ENCODE measurements at regions of chr16 and their contacts with region 1.

Region 1: DNA sequence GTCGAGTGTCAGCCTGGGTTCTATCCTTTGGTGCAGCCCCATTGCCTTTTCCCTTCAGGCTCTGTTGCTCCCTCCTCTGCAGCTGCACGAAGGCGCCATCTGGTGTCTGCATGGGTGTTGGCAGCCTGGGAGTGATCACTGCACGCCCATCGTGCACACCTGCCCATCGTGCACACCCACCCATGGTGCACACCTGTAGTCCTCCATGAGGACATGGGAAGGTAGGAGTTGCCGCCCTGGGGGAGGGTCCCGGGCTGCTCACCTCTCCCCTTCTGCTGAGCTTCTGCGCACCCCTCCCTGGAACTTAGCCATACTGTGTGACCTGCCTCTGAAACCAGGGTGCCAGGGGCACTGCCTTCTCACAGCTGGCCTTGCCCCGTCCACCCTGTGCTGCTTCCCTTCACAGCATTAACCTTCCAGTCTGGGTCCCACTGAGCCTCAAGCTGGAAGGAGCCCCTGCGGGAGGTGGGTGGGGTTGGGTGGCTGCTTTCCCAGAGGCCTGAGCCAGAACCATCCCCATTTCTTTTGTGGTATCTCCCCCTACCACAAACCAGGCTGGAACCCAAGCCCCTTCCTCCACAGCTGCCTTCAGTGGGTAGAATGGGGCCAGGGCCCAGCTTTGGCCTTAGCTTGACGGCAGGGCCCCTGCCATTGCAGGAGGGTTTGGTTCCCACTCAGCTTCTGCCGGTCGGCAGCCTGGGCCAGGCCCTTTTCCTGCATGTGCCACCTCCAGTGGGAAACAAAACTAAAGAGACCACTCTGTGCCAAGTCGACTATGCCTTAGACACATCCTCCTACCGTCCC is 2.9 kb downstream of the CTRL start:
- DNase-seq: peak; percentile 46 to 65
- ATAC-seq: peak; percentile 59 to 61
- H3K4me3 ChIP-seq: no peak overlapping the region
- H3K27ac ChIP-seq: peak overlapping the region in 2 of 4 donors; percentile 60 to 66
- H3K4me1 ChIP-seq: peaks cover 29 to 34% of the 10 kb centered on the region in 2 donors
- H3K27me3 ChIP-seq: no peaks in the 10 kb centered on the region
- CTCF ChIP-seq: peak; percentile 88 to 95 (median 93)
- POLR2A ChIP-seq: no peak

Region 2: GRCh38 chr16:67672739-67673662 is 255.8 kb before region 1 on chr16:
- in situ Hi-C with region 1: no loop called
- intact Hi-C with region 1: loop called (anchors 10 kb)
- DNase-seq: peak; percentile 40 to 57
- ATAC-seq: peak; percentile 38 to 51
- H3K4me3 ChIP-seq: no peak overlapping the region
- H3K27ac ChIP-seq: peak overlapping the region; percentile 50 to 80 (median 73)
- H3K4me1 ChIP-seq: peaks cover 13 to 21% of the 10 kb centered on the region in 2 donors
- H3K27me3 ChIP-seq: no peaks in the 10 kb centered on the region
- CTCF ChIP-seq: peak; percentile 63 to 82 (median 74)
- POLR2A ChIP-seq: no peak

Region 3: GRCh38 chr16:67816240-67817031 is 112.3 kb before region 1 on chr16:
- in situ Hi-C with region 1: loop called (anchors 5 to 10 kb)
- intact Hi-C with region 1: loop called (anchors 2 kb)
- DNase-seq: peak; percentile 69 to 81
- ATAC-seq: peak; percentile 91 to 96
- H3K4me3 ChIP-seq: no peak overlapping the region
- H3K27ac ChIP-seq: peak overlapping the region; percentile 49 to 78 (median 59)
- H3K4me1 ChIP-seq: no peaks in the 10 kb centered on the region
- H3K27me3 ChIP-seq: no peaks in the 10 kb centered on the region
- CTCF ChIP-seq: peak; percentile 99 to 100 (median 100)
- POLR2A ChIP-seq: no peak

Region 4: GRCh38 chr16:67822511-67822910 is 106.3 kb before region 1 on chr16:
- in situ Hi-C with region 1: loop called (anchors 5 to 10 kb)
- intact Hi-C with region 1: loop called (anchors 2 kb)
- DNase-seq: no peak
- ATAC-seq: no peak
- H3K4me3 ChIP-seq: no peak overlapping the region
- H3K27ac ChIP-seq: no peak overlapping the region
- H3K4me1 ChIP-seq: no peaks in the 10 kb centered on the region
- H3K27me3 ChIP-seq: no peaks in the 10 kb centered on the region
- CTCF ChIP-seq: no peak
- POLR2A ChIP-seq: no peak

Region 5: DNA sequence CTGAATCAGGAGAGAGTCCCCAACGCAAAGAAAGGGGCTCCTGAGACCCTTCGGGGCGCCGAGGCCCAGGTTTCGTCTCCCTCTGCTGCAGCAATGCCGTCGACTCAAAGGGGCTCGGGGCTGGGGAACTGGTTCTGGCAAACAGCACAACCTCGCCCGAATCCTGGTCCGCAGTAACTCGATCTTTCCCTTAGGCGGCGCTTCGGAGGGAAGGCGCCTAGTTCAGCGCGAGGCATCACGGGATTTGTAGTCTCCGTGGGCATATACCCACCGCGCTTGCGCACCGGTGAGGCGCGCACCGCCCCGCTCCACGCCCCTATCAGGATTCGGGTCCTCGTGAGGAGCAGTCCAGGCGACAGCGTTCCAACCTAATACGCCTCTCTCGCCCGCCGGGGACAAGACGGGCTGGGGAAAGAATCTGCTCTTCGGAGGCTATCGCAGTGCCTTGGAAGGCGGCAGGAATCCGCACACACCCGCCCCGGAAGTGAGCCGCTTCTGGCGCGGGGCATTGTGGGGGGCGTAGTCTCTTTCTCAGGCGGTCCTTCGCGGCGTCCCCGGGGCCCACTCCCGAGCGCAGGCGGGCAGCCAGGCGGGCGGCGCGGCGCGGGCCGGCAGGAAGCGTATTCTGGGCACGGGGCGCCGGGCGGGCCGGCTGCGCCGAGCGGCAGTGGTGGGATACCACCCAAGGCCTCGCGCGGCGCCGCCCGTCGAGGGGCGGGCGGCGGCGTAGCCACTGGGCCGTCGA is 86.8 kb before region 1 on chr16 and contains the start of gene THAP11:
- in situ Hi-C with region 1: no loop called
- intact Hi-C with region 1: loop called (anchors 5 kb)
- DNase-seq: peak; percentile 91 to 92
- ATAC-seq: peak; percentile 77 to 82
- H3K4me3 ChIP-seq: peak within 1 kb of the TSS; percentile 76 to 95 (median 78)
- H3K27ac ChIP-seq: peak within 1 kb of the TSS; percentile 98 to 100 (median 99)
- H3K4me1 ChIP-seq: peaks cover 39 to 43% of the 10 kb centered on the region in 2 donors
- H3K27me3 ChIP-seq: no peaks in the 10 kb centered on the region
- CTCF ChIP-seq: peak; percentile 76 to 91 (median 89)
- POLR2A ChIP-seq: peak; percentile 86 to 87
- total RNA-seq, gene THAP11: 61.9 to 120 (median 102) TPM

Region 6: DNA sequence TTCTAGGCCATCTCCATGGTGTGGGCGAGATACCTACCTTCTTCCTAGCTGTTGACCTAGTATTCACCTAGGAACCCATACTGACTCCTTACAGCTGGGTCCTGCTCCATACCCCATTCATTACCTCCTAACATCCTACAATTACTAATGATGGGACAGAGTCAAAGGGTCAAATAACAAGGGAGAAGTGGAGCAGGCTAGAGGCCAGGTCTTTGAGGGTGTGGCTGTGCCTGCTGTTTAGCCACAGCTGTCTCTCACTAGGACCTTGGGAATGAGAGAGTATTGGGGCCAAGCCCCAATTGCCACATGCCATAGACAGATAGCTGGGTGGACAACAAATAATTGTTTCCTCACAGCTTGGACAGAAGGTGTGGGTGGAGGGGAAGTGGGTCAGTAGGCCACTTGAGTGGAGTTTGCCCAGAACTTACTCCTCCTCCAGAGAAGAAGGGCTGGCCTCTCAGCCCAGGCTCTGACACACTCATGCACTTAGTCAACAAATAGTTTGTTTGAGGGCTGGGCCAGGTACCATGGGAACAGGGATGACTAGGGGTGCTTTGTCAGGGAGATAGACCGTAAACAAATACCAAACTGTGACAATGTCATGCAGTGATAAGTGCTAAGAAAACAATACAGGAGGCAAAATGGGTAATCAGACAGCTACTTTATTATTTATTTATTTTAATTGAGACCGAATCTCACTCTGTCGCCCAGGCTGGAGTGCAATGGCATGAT is 71.1 kb before region 1 on chr16:
- in situ Hi-C with region 1: no loop called
- intact Hi-C with region 1: no loop called
- DNase-seq: peak; percentile 91 to 92
- ATAC-seq: peak; percentile 87 to 90
- H3K4me3 ChIP-seq: peak overlapping the region in 1 of 4 donors; percentile 29
- H3K27ac ChIP-seq: peak overlapping the region; percentile 93 to 99 (median 97)
- H3K4me1 ChIP-seq: peaks cover 69% of the 10 kb centered on the region in 2 donors
- H3K27me3 ChIP-seq: no peaks in the 10 kb centered on the region
- CTCF ChIP-seq: no peak
- POLR2A ChIP-seq: no peak

Region 7: GRCh38 chr16:67872786-67873537 is 55.8 kb before region 1 on chr16 and contains the start of gene EDC4:
- in situ Hi-C with region 1: no loop called
- intact Hi-C with region 1: no loop called
- DNase-seq: peak; percentile 68 to 85
- ATAC-seq: peak; percentile 86 to 89
- H3K4me3 ChIP-seq: peak within 1 kb of the TSS; percentile 71 to 92 (median 84)
- H3K27ac ChIP-seq: peak within 1 kb of the TSS; percentile 85 to 94 (median 89)
- H3K4me1 ChIP-seq: peaks cover 28 to 31% of the 10 kb centered on the region in 2 donors
- H3K27me3 ChIP-seq: no peaks in the 10 kb centered on the region
- CTCF ChIP-seq: no peak
- POLR2A ChIP-seq: peak; percentile 73 to 88
- total RNA-seq, gene EDC4: 27.5 to 58.9 (median 48.5) TPM

Region 8: DNA sequence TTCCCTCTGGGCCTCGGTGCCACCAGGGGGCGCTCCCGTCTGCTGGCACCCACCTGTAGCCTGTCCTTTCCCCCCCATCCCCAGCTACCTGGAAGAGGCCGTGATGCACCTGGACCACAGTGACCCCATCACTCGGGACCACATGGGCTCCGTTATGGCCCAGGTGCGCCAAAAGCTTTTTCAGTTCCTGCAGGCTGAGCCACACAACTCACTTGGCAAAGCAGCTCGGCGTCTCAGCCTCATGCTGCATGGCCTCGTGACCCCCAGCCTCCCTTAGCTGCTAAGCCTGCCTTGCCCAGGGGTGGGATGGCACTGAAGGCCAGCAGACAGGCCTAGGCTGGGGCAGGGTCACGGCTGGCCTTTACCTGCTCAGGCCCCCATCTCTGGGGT is 44.9 kb before region 1 on chr16:
- in situ Hi-C with region 1: loop called in 1 of 4 experiments (anchors 10 kb)
- intact Hi-C with region 1: loop called (anchors 1 kb)
- DNase-seq: peak in 1 of 2 donors; percentile 64
- ATAC-seq: peak in 1 of 2 donors; percentile 22
- H3K4me3 ChIP-seq: no peak overlapping the region
- H3K27ac ChIP-seq: peak overlapping the region; percentile 87 to 95 (median 90)
- H3K4me1 ChIP-seq: peaks cover 51 to 52% of the 10 kb centered on the region in 2 donors
- H3K27me3 ChIP-seq: no peaks in the 10 kb centered on the region
- CTCF ChIP-seq: peak; percentile 76 to 91 (median 91)
- POLR2A ChIP-seq: no peak